ENCODE measurements at regions of chr17 and their contacts with region 1.

Region 1: DNA sequence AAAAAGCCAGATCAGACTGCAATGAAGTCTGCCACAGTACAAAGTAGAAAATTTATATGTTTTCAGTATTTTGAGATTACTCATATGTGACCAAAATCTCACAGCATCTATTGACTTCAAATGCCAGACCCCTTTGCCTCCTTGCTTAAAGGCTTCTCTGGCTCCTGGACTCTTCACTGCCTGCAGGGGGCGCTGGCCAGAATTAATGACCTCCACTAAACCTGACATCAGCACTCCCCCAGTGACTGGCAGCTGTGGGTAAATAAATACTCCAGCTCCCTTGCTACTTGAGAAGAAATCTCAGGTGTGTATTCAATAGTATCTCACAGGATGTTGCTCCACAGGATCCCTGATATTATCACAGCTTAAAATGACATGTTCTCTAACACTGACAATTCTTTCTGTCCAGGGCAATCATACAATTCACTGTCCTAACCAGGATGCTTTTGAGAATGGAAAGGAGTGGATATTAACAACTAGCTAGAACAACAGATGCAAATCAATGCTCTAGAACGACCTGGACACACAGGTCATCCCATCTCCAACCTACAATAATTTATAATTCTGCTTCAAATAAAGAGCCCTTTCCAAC is 4.0 kb downstream of the BECN1 start:
- DNase-seq: peak; percentile 74 to 78
- H3K4me3 ChIP-seq: no peak overlapping the region
- H3K4me3 Mint-ChIP-seq: no peak overlapping the region
- H3K27ac Mint-ChIP-seq: no peak overlapping the region
- H3K4me1 ChIP-seq: no peaks in the 10 kb centered on the region
- H3K4me1 Mint-ChIP-seq: peaks cover 6% of the 10 kb centered on the region
- H3K27me3 ChIP-seq: no peaks in the 10 kb centered on the region
- H3K27me3 Mint-ChIP-seq: no peaks in the 10 kb centered on the region
- CTCF ChIP-seq: peak; percentile 78 to 86

Region 2: GRCh38 chr17:42677008-42677857 is 142.8 kb before region 1 on chr17:
- CTCF ChIA-PET with region 1: interaction called, 11 read pairs
- POLR2A ChIA-PET with region 1: interaction called, 4 read pairs
- intact Hi-C with region 1: no loop called
- DNase-seq: peak; percentile 99 to 100
- H3K4me3 ChIP-seq: peak overlapping the region; percentile 85
- H3K4me3 Mint-ChIP-seq: peak overlapping the region; percentile 89
- H3K27ac Mint-ChIP-seq: peak overlapping the region; percentile 95
- H3K4me1 ChIP-seq: peaks cover 26% of the 10 kb centered on the region
- H3K4me1 Mint-ChIP-seq: peaks cover 8% of the 10 kb centered on the region
- H3K27me3 ChIP-seq: no peaks in the 10 kb centered on the region
- H3K27me3 Mint-ChIP-seq: no peaks in the 10 kb centered on the region
- CTCF ChIP-seq: no peak

Region 3: GRCh38 chr17:42760652-42761581 is 59.1 kb before region 1 on chr17 and contains the start of gene RAMP2:
- CTCF ChIA-PET with region 1: interaction called, 14 read pairs
- POLR2A ChIA-PET with region 1: no interaction called
- intact Hi-C with region 1: no loop called
- DNase-seq: peak; percentile 49 to 72
- H3K4me3 ChIP-seq: peak within 1 kb of the TSS; percentile 68
- H3K4me3 Mint-ChIP-seq: peak within 1 kb of the TSS; percentile 65
- H3K27ac Mint-ChIP-seq: peak within 1 kb of the TSS; percentile 56
- H3K4me1 ChIP-seq: peaks cover 28% of the 10 kb centered on the region
- H3K4me1 Mint-ChIP-seq: peaks cover 19% of the 10 kb centered on the region
- H3K27me3 ChIP-seq: no peaks in the 10 kb centered on the region
- H3K27me3 Mint-ChIP-seq: no peaks in the 10 kb centered on the region
- CTCF ChIP-seq: no peak
- total RNA-seq, gene RAMP2: 21.4 and 24.3 TPM in 2 replicates

Region 4: DNA sequence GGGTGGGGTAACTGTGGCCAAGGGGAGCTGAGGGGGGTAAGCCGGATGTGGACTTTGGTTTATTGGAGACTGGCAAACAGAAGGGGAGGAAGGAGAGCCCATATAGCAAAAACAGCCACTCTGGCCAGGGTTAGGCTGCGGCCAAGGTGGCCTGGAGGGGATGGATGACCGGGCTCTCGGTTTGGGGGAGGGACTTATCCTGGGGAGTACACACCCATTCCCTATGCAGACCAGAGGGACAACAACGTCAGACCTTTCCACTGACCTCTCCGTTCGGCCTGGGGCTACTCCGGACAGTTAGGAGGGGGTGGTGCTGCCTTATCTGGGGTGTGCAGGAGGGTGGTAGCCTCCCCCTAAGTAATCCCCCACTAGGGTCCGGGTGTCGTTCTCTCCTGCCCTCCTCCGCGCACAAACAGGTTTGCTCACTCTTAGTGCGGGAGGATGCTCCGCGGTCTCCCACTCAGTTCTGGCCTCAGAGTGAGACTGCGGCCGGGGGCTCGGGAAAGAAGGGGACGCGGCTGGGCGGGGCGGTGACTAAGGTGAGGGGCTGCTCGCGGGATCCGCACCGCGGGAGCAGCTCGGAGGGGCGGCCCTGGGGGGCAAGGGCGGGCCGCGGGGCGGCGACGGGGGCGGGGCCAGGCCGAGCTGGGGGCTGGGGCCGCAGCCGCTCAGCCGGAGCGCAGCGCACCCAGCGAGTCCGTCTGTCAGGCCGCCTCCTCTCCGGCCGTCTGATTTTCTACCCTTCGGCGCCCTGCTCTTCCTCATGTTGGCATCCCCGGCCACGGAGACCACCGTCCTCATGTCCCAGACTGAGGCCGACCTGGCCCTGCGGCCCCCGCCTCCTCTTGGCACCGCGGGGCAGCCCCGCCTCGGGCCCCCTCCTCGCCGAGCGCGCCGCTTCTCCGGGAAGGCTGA is 39.8 kb before region 1 on chr17 and contains the start of gene WNK4:
- CTCF ChIA-PET with region 1: interaction called, 6 read pairs
- POLR2A ChIA-PET with region 1: interaction called, 14 read pairs
- intact Hi-C with region 1: loop called (anchors 5 kb)
- DNase-seq: peak; percentile 76 to 91
- H3K4me3 ChIP-seq: peak within 1 kb of the TSS; percentile 85
- H3K4me3 Mint-ChIP-seq: peak within 1 kb of the TSS; percentile 76
- H3K27ac Mint-ChIP-seq: peak within 1 kb of the TSS; percentile 65
- H3K4me1 ChIP-seq: peaks cover 29% of the 10 kb centered on the region
- H3K4me1 Mint-ChIP-seq: peaks cover 19% of the 10 kb centered on the region
- H3K27me3 ChIP-seq: no peaks in the 10 kb centered on the region
- H3K27me3 Mint-ChIP-seq: no peaks in the 10 kb centered on the region
- CTCF ChIP-seq: no peak
- total RNA-seq, gene WNK4: 3.3 and 4.1 TPM in 2 replicates

Region 5: DNA sequence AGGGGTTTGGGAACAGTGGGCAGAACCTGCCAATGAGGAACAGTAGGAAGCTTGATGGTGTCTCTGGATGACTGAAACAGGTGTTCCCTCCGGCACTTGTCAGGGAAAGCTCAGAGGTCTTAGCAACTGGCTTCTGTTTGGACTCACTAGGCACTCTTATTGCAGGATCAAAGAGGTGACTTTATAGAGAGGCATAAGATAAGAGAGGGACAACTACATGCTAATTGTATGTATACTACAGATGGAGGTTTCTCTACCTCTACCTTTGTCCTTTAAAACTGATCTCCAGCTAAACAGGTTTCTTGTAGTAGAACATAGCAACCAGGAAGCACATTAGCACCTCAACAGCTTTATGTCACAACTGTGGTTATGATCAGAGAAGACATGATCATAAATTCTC is 13.8 kb before region 1 on chr17:
- CTCF ChIA-PET with region 1: interaction called, 6 read pairs
- POLR2A ChIA-PET with region 1: interaction called, 6 read pairs
- intact Hi-C with region 1: loop called (anchors 2 kb)
- DNase-seq: no peak
- H3K4me3 ChIP-seq: no peak overlapping the region
- H3K4me3 Mint-ChIP-seq: no peak overlapping the region
- H3K27ac Mint-ChIP-seq: peak overlapping the region; percentile 42
- H3K4me1 ChIP-seq: peaks cover 24% of the 10 kb centered on the region
- H3K4me1 Mint-ChIP-seq: peaks cover 6% of the 10 kb centered on the region
- H3K27me3 ChIP-seq: no peaks in the 10 kb centered on the region
- H3K27me3 Mint-ChIP-seq: no peaks in the 10 kb centered on the region
- CTCF ChIP-seq: no peak

Region 6: DNA sequence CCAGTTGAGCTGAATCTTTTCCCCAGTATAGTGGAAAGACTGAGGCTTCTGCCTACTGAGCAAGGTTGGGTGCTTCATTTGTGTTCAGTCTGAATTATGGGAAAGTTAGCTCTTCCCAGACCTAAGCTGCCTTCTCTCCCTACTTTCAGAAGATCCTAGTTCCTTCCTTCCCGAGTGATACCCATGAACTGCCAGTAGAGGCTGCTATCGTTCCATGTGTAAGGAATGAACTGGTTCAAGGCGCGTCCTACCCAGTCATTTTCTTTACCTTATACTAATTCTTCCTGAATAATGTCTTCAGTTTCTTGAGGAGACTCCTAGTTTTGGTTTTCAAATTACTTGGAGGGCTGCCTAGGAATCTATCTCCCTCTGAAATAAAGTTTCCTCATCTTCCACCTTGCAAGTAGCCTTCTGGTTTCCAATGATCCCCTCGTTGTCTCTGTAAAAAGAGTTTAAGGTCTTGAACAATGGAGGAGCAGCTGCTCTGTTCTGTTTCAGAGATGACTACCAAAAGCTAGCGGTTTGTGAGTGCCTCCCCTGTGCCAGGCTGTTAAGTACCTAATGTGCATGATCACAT is 23.4 kb after region 1 on chr17:
- CTCF ChIA-PET with region 1: interaction called, 10 read pairs
- POLR2A ChIA-PET with region 1: no interaction called
- intact Hi-C with region 1: loop called (anchors 1 kb)
- DNase-seq: peak in 1 of 2 experiments; percentile 70
- H3K4me3 ChIP-seq: no peak overlapping the region
- H3K4me3 Mint-ChIP-seq: no peak overlapping the region
- H3K27ac Mint-ChIP-seq: no peak overlapping the region
- H3K4me1 ChIP-seq: no peaks in the 10 kb centered on the region
- H3K4me1 Mint-ChIP-seq: no peaks in the 10 kb centered on the region
- H3K27me3 ChIP-seq: no peaks in the 10 kb centered on the region
- H3K27me3 Mint-ChIP-seq: no peaks in the 10 kb centered on the region
- CTCF ChIP-seq: peak; percentile 96 to 99